Activated CD8-positive, alpha-beta memory T cell treated with anti-CD3 and anti-CD28 coated beads, Interleukin-2, amount 10 ng/mL, durations not matched to agents 7 days and 5 days (primary cell): ENCODE measurements at regions of chr15 and their contacts with region 1.

Region 1: DNA sequence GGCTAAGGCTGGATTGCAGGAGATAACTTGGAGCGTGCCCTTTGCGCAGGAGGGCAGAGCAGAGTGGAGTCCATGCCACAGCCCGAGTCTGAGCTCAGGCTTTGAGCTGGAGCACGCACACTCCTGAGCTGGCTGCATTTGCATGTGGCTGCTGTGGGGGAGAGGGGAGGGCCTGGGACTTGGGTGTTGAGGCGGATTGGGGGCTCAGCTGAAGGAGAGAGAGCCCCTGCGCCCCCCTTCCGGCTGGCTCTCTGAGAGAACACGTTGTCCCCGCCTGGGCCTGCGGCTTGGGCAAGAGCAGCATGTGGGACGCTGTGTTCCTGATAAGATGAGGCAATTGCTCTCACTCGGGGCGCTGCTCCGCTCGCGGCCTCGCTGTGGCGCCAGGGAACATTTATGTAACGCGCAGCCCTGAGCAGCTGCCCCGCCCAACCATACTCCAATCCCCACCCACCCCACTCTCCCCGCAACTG is 39.1 kb downstream of the KLF13 start:
- DNase-seq: peak; percentile 93
- ATAC-seq: peak; percentile 66
- H3K4me3 Mint-ChIP-seq: peak overlapping the region; percentile 58
- H3K27ac Mint-ChIP-seq: peak overlapping the region; percentile 100
- H3K4me1 Mint-ChIP-seq: peaks cover 100% of the 10 kb centered on the region
- H3K27me3 Mint-ChIP-seq: no peaks in the 10 kb centered on the region

Region 2: DNA sequence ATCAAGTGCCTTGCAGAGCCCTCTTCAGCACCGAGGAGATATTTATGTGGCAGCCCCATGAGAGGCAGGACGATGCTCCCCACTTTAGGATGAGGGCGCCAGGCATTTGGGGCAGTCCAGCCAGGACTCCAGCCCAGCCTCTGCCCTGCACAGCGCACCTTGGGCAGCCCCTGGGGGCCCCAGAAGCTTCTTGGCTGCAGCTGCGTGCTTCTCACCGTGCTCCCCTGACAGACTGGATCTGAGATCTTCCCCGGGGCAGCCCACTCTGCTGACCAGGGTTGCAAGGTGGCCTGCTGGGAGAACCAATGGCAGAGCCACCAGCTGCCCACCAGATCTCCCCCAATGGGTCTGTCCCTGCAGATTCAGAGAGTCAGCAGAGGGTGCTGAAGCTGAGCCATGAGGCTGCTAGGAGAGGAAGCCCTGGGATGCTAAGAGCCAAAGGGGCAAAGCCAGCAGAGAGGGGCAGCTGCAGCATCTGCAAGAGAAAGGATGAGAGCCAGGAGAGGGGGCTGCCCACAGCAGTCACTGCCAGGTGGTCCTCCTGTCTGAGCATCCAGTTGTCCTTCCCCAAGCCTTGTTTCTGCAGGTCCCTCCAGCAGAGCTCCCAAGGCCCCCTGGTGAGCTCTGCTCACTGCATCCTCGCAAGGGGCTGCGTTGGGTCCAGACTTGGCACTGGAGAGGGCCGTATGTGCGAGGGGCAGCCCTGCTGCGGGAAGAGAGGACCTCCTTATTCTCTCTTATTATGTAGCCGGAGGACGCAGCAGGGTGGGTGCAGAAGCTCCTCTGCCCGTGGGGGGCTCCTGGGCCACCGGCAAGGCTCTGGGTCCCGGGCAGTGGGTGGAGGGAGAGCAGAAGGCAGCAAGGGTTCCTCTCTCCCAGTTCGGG is 53.7 kb before region 1 on chr15:
- CTCF ChIA-PET with region 1: no interaction called
- DNase-seq: peak; percentile 23
- ATAC-seq: no peak
- H3K4me3 Mint-ChIP-seq: no peak overlapping the region
- H3K27ac Mint-ChIP-seq: no peak overlapping the region
- H3K4me1 Mint-ChIP-seq: peaks cover 16% of the 10 kb centered on the region
- H3K27me3 Mint-ChIP-seq: peaks cover 4% of the 10 kb centered on the region

Region 3: GRCh38 chr15:31326156-31326732 is 39.4 kb before region 1 on chr15:
- CTCF ChIA-PET with region 1: interaction called, 20 read pairs
- DNase-seq: peak; percentile 99
- ATAC-seq: peak; percentile 80
- H3K4me3 Mint-ChIP-seq: peak overlapping the region; percentile 64
- H3K27ac Mint-ChIP-seq: peak overlapping the region; percentile 93
- H3K4me1 Mint-ChIP-seq: peaks cover 40% of the 10 kb centered on the region
- H3K27me3 Mint-ChIP-seq: no peaks in the 10 kb centered on the region

Region 4: GRCh38 chr15:31391687-31392671 is 26.3 kb after region 1 on chr15:
- CTCF ChIA-PET with region 1: interaction called, 17 read pairs
- DNase-seq: peak; percentile 90
- ATAC-seq: peak; percentile 86
- H3K4me3 Mint-ChIP-seq: peak overlapping the region; percentile 91
- H3K27ac Mint-ChIP-seq: peak overlapping the region; percentile 92
- H3K4me1 Mint-ChIP-seq: peaks cover 56% of the 10 kb centered on the region
- H3K27me3 Mint-ChIP-seq: no peaks in the 10 kb centered on the region

Region 5: DNA sequence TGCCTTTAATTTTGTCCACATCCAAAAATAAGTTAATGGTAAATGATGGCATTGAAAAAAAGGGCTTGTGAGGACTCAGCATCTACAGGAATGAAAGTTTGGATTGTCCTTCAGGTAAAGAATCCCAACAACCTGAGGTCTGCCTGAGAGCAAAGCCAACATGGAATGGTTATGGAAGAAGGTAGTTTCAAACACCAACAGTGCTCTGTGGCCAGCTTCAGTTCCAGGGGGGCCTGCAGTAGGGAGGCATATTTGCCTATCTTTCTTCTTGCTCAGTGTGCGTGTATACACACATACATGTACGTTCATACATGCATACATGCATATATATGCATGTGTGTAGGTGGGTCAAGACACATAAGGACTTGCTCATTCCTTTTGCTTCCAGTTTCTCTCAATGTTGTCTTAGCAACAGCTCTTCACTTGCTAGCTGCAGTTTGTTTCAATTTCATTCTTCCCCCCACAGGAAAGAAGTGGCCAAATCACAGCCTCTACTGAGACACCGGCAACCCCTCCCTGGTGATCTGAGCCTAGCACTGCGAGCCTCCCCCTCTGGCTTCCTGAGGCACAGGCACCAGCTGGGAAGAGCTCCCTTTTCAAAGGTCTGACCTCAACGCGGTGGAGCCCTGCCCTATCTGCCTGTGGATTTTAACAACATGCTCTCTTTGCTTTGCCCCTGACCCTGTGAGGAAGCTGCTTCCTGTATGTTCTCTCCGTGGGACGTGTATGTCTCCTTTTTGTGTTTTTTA is 107.1 kb after region 1 on chr15:
- CTCF ChIA-PET with region 1: interaction called, 10 read pairs
- DNase-seq: peak; percentile 80
- ATAC-seq: peak; percentile 94
- H3K4me3 Mint-ChIP-seq: peak overlapping the region; percentile 69
- H3K27ac Mint-ChIP-seq: peak overlapping the region; percentile 93
- H3K4me1 Mint-ChIP-seq: peaks cover 38% of the 10 kb centered on the region
- H3K27me3 Mint-ChIP-seq: no peaks in the 10 kb centered on the region